ENCODE measurements at regions of chr3 and their contacts with region 1.

Region 1: DNA sequence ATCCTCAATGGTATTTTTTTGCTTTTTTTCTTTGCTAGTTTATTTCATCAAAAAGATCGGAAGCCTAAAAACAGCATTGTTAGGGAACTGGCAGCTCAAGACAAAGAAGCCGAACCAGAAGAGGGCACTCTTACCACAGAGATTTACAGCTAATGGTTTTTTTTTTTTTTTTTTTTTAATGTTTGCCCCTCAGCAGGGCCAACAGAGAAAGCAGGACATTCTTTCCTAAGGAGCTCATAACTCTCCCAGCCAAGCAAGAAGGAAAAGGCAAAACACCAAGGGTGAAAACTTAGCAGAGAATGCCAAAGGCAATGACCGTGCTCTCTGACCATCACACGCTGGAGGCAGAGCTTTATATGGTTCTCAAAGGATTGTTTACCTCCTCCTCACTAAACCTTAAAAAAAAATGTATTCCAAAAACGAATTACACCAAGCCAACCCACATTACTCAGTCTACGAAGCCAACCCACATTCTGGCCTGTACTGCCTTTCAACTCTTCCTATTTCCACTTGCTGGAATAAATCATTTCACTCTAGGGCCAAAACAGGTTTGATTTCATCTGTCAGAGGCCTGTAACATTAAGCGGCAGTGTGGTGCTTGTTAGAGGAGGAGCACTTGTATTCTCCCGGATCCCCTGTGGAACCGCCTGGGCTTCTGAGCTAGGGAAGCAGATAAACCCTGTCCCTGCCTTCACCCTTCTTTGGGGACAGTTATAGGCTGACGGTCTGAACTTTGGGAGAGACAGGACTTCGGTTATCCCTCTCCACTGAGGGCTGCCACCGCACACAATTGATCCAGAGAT is 35.6 kb upstream of the GYG1 start:
- DNase-seq: no peak

Region 2: DNA sequence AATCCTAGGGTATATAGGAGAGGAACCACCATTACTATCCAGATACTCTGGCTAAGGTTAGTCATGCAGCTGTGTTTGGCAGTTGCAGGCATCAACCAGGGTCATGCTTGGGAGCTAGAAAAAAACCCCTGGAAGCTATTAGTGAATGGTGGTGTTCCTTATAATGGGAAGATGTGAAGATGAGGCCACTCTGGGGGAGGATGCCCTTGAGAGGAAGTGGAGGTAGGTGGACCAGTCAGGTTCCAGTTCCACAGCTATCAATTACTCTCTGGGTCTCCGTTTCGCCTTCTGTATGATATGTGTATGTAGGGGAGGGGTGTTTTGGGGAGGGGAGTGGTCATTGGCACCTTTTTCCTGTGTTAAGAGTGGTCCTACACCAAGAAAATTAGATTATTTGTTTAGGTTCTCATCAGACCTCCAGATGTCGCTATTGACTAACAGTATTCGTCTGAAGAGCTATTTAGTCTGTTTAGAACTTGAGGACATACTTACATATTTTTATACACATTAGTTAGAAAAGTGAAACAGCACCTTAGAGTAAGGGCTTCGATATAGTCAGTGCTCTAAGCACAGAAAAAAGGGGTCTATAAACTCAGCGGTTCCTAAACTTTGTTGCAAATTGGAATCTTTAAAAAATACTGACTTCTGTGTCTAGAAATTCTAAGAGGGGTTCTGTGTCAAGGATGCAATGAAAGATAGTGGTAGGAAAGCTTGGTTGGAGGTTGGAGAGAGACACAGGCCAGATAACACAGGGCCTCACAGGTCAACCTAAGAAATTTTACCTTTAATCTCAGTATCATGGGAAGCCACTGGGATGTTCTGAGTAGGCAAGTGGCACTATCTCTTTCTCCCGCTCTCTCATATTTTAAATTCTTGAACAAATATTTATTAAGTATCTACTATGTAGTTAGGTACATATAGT is 164.6 kb after region 1 on chr3:
- intact Hi-C with region 1: loop called (anchors 5 kb)
- DNase-seq: no peak

Region 3: GRCh38 chr3:149273096-149273751 is 317.5 kb after region 1 on chr3:
- intact Hi-C with region 1: loop called (anchors 1 kb)
- DNase-seq: no peak

Region 4: GRCh38 chr3:149339931-149340309 is 384.2 kb after region 1 on chr3:
- intact Hi-C with region 1: loop called (anchors 5 kb)
- DNase-seq: peak; percentile 91

Measured in cardiac septum (tissue), 1 donor.